Esophagus muscularis mucosa (tissue), 4 donors: ENCODE measurements at regions of chr17 and their contacts with region 1.

Region 1: DNA sequence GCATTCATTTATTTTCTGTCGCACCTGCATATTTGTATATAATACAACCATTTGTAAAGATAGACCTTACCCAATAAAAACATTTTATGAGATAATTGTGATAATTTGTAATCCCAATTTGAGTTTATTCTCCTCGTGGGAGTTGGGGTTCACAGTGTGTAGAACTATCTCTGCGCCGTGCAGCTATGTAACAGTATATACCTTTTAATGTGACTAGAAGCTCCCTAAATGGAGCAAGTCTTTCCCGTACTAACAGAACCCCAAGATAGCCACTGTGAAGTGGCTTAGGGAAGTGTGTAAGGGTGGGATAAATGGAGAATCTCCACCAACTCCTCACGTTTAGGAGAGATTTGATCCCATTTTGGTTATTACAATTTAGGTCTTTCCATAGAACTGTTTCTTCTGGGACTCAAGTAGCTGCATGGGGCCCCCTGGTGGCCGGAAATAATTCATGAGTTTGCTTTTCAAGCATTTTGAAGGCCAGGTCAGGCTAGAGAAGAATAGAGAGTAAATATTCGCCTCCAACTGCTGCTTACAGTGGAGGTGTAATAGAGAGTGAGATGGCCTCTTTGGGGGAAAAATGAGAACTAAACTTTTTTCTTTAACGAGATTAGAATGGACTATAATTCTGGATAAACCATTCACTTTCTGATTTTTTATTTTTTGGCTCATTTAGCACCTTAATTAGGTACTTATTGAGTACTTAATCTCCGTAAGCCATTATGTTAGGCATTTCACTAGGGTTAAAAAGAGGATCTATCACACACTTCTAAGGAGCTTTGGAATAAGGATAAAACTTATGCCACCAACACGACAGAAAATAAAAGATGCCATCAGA is 4.5 kb downstream of the TMEM100 start:
- DNase-seq: no peak
- H3K4me3 ChIP-seq: no peak overlapping the region
- H3K27ac ChIP-seq: no peak overlapping the region
- H3K4me1 ChIP-seq: peaks cover 7 to 22% (median 16%) of the 10 kb centered on the region in 4 donors
- H3K27me3 ChIP-seq: no peaks in the 10 kb centered on the region
- CTCF ChIP-seq: peak; percentile 67 to 80 (median 75)
- EP300 ChIP-seq: no peak
- POLR2A ChIP-seq: no peak

Region 2: GRCh38 chr17:55740511-55741355 is 22.6 kb after region 1 on chr17:
- intact Hi-C with region 1: no loop called
- DNase-seq: no peak
- H3K4me3 ChIP-seq: no peak overlapping the region
- H3K27ac ChIP-seq: no peak overlapping the region
- H3K4me1 ChIP-seq: peaks cover 0 to 3% (median 0%) of the 10 kb centered on the region in 4 donors
- H3K27me3 ChIP-seq: no peaks in the 10 kb centered on the region
- CTCF ChIP-seq: no peak
- EP300 ChIP-seq: no peak
- POLR2A ChIP-seq: no peak

Region 3: GRCh38 chr17:55750750-55751657 is 32.9 kb after region 1 on chr17 and contains the start of gene PCTP:
- intact Hi-C with region 1: loop called (anchors 5 kb)
- DNase-seq: peak; percentile 98
- H3K4me3 ChIP-seq: peak within 1 kb of the TSS; percentile 81 to 89 (median 82)
- H3K27ac ChIP-seq: peak within 1 kb of the TSS; percentile 86 to 89 (median 88)
- H3K4me1 ChIP-seq: peaks cover 13 to 38% (median 22%) of the 10 kb centered on the region in 4 donors
- H3K27me3 ChIP-seq: no peaks in the 10 kb centered on the region
- CTCF ChIP-seq: peak in 1 of 3 experiments; percentile 57
- EP300 ChIP-seq: no peak
- POLR2A ChIP-seq: peak; percentile 68
- total RNA-seq, gene PCTP: 11.2 to 17.4 (median 11.8) TPM

Region 4: GRCh38 chr17:55770148-55770870 is 52.2 kb after region 1 on chr17:
- intact Hi-C with region 1: loop called (anchors 5 kb)
- DNase-seq: no peak
- H3K4me3 ChIP-seq: no peak overlapping the region
- H3K27ac ChIP-seq: peak overlapping the region in 2 of 4 donors; percentile 44 to 66
- H3K4me1 ChIP-seq: peaks cover 0 to 22% (median 17%) of the 10 kb centered on the region in 4 donors
- H3K27me3 ChIP-seq: no peaks in the 10 kb centered on the region
- CTCF ChIP-seq: peak; percentile 59 to 70 (median 62)
- EP300 ChIP-seq: no peak
- POLR2A ChIP-seq: no peak